ENCODE measurements at regions of chr20 and their contacts with region 1.

Region 1: DNA sequence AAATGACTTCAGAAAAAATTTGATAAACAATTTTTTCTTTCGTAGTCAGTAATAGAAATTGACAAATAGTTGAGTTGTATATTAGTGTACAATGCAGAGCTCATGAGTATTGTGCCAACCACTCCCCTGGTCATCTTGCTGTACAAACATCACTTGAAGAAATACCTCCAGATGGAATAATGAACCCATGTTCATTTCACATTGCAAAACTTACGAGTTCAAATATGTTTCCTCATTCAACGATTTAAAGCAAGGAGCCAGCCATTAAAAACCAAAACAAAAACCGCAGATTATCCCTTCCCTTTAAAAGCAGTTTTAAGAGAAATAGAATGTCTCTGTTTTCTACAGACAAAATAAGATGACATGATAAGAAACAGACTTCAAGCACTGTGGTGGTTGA is 62.5 kb downstream of the RALGAPA2 start:
- DNase-seq: no peak
- ATAC-seq: no peak
- H3K4me3 ChIP-seq: no peak overlapping the region
- H3K27ac ChIP-seq: no peak overlapping the region
- H3K4me1 ChIP-seq: no peaks in the 10 kb centered on the region
- H3K27me3 ChIP-seq: no peaks in the 10 kb centered on the region
- CTCF ChIP-seq: no peak

Region 2: DNA sequence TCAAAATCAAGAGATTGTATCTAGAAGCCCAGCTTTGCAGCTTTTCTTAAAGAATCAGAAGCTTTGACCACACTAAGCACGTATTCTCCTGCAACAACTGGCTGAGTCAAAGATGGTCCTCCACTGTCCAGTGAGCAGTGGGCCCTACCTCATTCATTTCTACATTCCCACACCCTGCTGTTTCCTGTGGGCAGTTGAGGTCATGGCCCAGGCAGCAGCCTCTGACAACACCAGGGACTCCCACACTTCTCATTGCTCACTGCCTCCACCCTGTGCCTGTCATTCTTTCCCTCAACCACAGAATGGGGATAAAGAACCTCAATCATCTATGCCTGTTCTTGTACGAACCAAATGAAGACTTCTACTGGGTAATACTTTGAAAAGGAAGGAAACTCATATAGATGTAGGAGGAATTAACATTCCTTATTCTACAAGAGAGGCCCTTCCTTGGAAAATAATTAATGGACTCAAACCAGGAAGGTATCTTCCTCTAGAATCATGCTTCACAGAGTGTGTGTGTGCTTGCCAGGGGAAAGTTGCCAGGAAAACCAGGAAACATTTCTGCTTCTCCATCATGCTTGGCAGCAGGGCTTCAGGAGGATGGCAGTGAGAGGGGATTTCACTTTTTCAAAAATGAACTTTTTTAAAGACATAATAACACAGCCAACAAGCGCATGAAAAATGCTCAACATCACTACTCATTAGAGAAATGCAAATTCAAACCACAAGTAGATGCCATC is 1083.5 kb before region 1 on chr20:
- CTCF ChIA-PET with region 1: no interaction called
- POLR2A ChIA-PET with region 1: no interaction called
- in situ Hi-C with region 1: no loop called
- intact Hi-C with region 1: no loop called
- DNase-seq: no peak
- ATAC-seq: no peak
- H3K4me3 ChIP-seq: no peak overlapping the region
- H3K27ac ChIP-seq: no peak overlapping the region
- H3K4me1 ChIP-seq: no peaks in the 10 kb centered on the region
- H3K27me3 ChIP-seq: no peaks in the 10 kb centered on the region
- CTCF ChIP-seq: no peak

Region 3: DNA sequence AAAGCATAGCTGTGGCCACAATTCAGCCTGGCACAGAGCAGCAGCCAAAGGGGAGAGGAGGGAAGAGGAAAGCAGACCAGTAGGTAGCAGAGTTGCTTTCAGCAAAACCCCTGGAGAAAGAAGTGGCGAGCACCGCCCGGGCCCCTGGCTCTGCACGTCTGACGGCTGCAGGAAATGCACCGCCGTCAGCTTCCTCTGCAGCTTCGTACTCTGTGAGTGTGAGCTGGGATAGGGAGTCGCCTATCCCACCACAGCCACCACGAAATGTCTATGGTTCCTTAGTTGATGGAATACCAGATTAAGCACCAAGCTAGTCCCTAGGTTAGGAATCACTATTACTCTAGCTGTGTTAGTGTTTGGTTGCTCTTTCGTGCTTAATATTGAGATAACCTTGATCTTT is 712.7 kb before region 1 on chr20:
- CTCF ChIA-PET with region 1: no interaction called
- POLR2A ChIA-PET with region 1: interaction called, 12 read pairs
- in situ Hi-C with region 1: no loop called
- intact Hi-C with region 1: no loop called
- DNase-seq: no peak
- ATAC-seq: 0 out of 2 replicates have a peak, but pooled peaks have one; percentile 30
- H3K4me3 ChIP-seq: no peak overlapping the region
- H3K27ac ChIP-seq: no peak overlapping the region
- H3K4me1 ChIP-seq: peaks cover 4% of the 10 kb centered on the region; the same call in 1 of the 2 replicates
- H3K27me3 ChIP-seq: no peaks in the 10 kb centered on the region
- CTCF ChIP-seq: no peak

Measured in Panc1 (cell line).